Activated B cell treated with CpG ODN at 0.5 μM for 24 hours (primary cell): ENCODE measurements at regions of chr2 and their contacts with region 1.

Region 1: DNA sequence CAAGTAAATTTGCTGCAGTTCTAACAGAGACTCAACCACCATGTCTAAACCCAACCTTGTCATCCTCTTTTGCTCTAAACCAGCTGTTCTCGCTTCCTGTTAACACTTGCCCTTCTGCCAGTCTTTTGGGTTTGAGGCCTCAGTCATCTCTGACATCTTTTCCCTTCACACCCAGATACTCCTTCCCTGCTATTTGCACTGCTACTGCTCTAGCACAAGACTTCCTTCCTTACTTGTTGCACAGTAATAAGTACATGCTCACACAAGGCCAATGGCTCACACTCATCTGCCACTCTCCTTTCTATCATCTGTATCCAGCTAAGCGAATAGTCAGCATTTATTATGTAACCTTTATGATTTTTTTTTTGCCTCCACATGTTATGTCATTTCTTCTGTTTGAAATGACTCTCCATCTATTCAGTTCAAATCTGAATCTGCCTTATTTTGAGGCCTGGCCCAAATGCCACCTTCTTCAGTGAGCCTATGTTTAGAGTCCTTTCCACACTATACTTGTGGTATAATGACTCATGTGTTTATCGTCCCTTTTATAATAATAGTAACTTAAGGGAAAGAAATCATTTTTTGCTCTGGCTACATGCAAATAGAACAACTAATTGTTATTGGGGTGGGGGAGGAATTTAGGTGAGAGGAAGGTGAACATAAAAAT is 22.5 kb upstream of the CDKL4 start:
- DNase-seq: no peak
- ATAC-seq: peak; percentile 69
- H3K4me3 Mint-ChIP-seq: peak overlapping the region; percentile 2
- H3K27ac Mint-ChIP-seq: peak overlapping the region; percentile 85
- H3K4me1 Mint-ChIP-seq: peaks cover 29% of the 10 kb centered on the region
- H3K27me3 Mint-ChIP-seq: no peaks in the 10 kb centered on the region
- CTCF ChIP-seq: no peak

Region 2: GRCh38 chr2:39243476-39244123 is 22.7 kb before region 1 on chr2 and contains the start of gene CDKL4:
- CTCF ChIA-PET with region 1: no interaction called
- POLR2A ChIA-PET with region 1: interaction called, 4 read pairs
- intact Hi-C with region 1: loop called (anchors 1 kb)
- DNase-seq: peak; percentile 47
- ATAC-seq: peak; percentile 81
- H3K4me3 Mint-ChIP-seq: peak within 1 kb of the TSS; percentile 87
- H3K27ac Mint-ChIP-seq: peak within 1 kb of the TSS; percentile 35
- H3K4me1 Mint-ChIP-seq: peaks cover 23% of the 10 kb centered on the region
- H3K27me3 Mint-ChIP-seq: no peaks in the 10 kb centered on the region
- CTCF ChIP-seq: no peak
- total RNA-seq, gene CDKL4: 0.24 TPM in 1 of 2 replicates, not detected in the other

Region 3: GRCh38 chr2:39350658-39351057 is 84.4 kb after region 1 on chr2:
- CTCF ChIA-PET with region 1: no interaction called
- POLR2A ChIA-PET with region 1: no interaction called
- intact Hi-C with region 1: no loop called
- DNase-seq: no peak
- ATAC-seq: no peak
- H3K4me3 Mint-ChIP-seq: no peak overlapping the region
- H3K27ac Mint-ChIP-seq: no peak overlapping the region
- H3K4me1 Mint-ChIP-seq: no peaks in the 10 kb centered on the region
- H3K27me3 Mint-ChIP-seq: no peaks in the 10 kb centered on the region
- CTCF ChIP-seq: no peak

Region 4: DNA sequence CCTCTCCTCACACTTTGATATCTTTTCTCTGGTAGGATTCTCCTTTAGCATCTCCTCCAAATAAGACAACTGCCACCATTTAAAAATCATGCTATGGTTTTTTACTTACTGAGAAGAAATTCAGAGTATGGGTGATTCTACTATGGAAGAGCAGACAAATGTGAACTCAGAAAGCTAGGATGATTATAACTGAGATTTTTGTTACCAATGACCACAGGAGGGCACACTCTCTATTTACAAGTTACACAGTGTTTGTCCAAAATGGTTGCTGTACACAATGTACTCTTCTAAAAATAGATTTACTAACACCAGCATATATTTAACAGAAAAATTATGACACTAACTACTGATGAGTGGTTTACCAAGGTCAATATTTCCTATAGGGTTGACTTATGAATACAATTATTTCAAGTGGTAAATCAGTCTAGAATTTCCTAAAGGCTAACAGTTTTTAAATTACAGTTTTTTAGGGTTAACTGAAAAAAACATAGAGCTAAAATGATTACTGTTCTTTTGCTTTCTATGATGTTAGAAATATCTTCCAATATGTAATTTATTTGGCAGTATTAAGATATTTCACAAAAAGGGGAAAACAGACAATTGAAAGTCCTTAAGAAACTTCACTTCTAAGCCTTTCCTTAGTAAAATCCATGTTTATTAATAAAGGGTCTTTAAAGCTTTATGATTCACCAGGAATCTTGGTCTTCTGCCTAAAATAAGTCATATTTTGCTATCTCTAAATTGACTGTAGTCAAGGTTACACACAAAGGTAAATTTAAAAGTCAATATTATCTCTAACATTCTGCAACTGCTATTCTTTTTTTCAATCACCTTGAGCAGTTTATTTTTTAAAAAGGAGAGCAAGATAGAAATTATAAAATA is 113.6 kb after region 1 on chr2:
- CTCF ChIA-PET with region 1: no interaction called
- POLR2A ChIA-PET with region 1: no interaction called
- intact Hi-C with region 1: loop called (anchors 5 kb)
- DNase-seq: no peak
- ATAC-seq: peak; percentile 35
- H3K4me3 Mint-ChIP-seq: no peak overlapping the region
- H3K27ac Mint-ChIP-seq: no peak overlapping the region
- H3K4me1 Mint-ChIP-seq: peaks cover 30% of the 10 kb centered on the region
- H3K27me3 Mint-ChIP-seq: no peaks in the 10 kb centered on the region
- CTCF ChIP-seq: no peak